Endothelial cell of umbilical vein (primary cell): ENCODE measurements at regions of chrX and their contacts with region 1.

Region 1: GRCh38 chrX:80285131-80285773 is 135.0 kb upstream of the TENT5D start:
- DNase-seq: no peak
- H3K4me3 ChIP-seq: no peak overlapping the region
- H3K27ac ChIP-seq: no peak overlapping the region
- H3K4me1 ChIP-seq: no peaks in the 10 kb centered on the region
- H3K27me3 ChIP-seq: no peaks in the 10 kb centered on the region
- CTCF ChIP-seq: no peak
- POLR2A ChIP-seq: no peak

Region 2: DNA sequence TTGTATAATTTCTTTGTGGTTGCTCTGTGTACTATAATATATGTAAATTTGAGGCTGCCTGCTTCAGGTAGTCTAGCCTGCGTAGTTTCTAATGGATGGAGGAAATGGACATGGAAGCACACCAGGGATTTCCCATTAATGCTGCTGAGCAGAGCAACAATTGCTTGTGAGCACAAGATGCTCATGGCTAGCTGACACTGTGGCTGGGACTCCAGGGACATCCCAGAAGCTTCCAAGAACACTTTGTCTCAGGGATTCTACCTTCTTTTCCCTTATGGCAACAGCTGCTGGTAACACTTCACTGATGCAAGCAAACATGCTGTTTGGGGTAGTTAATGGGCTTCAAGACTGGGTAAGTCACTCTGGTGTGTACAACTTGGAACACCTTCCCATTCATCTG is 201.0 kb after region 1 on chrX:
- CTCF ChIA-PET with region 1: no interaction called
- POLR2A ChIA-PET with region 1: no interaction called
- dilution Hi-C with region 1: no loop called
- intact Hi-C with region 1: no loop called
- DNase-seq: no peak
- H3K4me3 ChIP-seq: no peak overlapping the region
- H3K27ac ChIP-seq: no peak overlapping the region
- H3K4me1 ChIP-seq: no peaks in the 10 kb centered on the region
- H3K27me3 ChIP-seq: no peaks in the 10 kb centered on the region
- CTCF ChIP-seq: no peak
- POLR2A ChIP-seq: no peak

Region 3: GRCh38 chrX:81195712-81196111 is 910.5 kb after region 1 on chrX:
- CTCF ChIA-PET with region 1: interaction called, 4 read pairs
- POLR2A ChIA-PET with region 1: no interaction called
- dilution Hi-C with region 1: no loop called
- intact Hi-C with region 1: loop called (anchors 10 kb)
- DNase-seq: peak; percentile 58
- H3K4me3 ChIP-seq: no peak overlapping the region
- H3K27ac ChIP-seq: no peak overlapping the region
- H3K4me1 ChIP-seq: no peaks in the 10 kb centered on the region
- H3K27me3 ChIP-seq: no peaks in the 10 kb centered on the region
- CTCF ChIP-seq: peak; percentile 33 to 54
- POLR2A ChIP-seq: no peak